WTC11 (cell line): ENCODE measurements at regions of chr20 and their contacts with region 1.

Region 1: DNA sequence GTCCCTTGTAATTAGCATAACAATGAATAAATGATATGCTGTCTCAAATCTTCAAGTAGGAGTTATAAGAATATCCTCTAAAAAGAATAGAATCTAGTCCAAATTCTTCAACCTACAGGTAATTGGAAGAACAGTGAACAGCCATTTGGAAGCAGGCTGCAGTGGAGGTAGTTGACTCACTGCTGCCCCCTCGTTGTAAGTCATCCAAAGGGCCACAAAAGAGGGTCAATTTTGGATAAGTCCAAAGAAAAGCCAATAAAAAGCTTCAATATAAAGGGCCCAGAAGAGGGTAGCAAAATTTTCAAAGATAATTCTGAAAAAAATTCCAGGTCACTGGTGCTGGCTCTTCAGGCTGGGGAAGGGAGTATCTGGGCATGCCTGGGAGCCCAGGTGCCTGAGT is 60.8 kb upstream of the SSTR4 start:
- DNase-seq: peak; percentile 41
- ATAC-seq: peak; percentile 79
- H3K4me3 Mint-ChIP-seq: no peak overlapping the region
- H3K27ac Mint-ChIP-seq: no peak overlapping the region
- H3K4me1 Mint-ChIP-seq: peaks cover 15% of the 10 kb centered on the region
- H3K27me3 Mint-ChIP-seq: peaks cover 9% of the 10 kb centered on the region
- CTCF ChIP-seq: peak; percentile 47

Region 2: DNA sequence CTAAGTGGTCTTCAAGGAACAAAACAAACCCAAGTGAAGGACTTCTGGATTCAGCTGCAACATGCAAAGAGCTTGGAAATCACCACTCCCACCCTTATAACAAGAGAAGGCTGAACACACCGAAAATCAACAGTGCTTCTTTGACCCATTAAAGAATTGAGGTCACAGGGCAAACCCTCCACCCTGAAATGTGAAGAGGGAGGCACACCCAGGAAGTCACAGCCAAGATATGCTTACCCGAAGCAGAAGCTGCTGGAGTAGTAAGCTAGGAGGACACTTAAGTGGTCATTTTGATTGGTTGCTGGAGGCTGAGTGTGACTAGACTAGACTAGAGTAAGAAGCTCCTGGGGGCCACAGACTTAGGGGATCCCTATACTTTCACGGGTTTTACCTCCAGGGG is 127.5 kb before region 1 on chr20:
- CTCF ChIA-PET with region 1: interaction called, 28 read pairs
- POLR2A ChIA-PET with region 1: no interaction called
- DNase-seq: no peak
- ATAC-seq: no peak
- H3K4me3 Mint-ChIP-seq: no peak overlapping the region
- H3K27ac Mint-ChIP-seq: no peak overlapping the region
- H3K4me1 Mint-ChIP-seq: 0 out of 2 replicates have a peak, but pooled peaks cover 3% of the 10 kb centered on the region
- H3K27me3 Mint-ChIP-seq: no peaks in the 10 kb centered on the region
- CTCF ChIP-seq: no peak

Region 3: DNA sequence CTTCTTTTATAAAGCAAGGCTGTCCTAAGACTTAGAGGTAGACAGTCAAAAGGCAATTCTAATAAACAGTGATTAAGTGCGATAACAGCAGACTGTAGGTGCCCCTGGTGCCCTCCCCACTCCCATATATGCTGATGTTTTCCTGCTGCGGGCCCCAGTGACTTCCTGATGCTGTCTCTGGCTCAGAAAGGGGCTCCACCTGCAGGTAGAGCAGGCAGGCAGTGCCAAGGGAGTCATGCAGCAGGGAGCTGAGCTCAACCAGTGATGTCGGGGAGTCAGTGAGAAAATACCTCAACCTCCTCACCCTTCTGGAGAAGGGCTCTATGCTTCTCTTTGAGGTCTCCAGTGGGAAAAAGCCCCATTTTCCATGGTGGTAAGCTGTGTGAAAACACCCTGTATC is 65.9 kb before region 1 on chr20:
- CTCF ChIA-PET with region 1: interaction called, 14 read pairs
- POLR2A ChIA-PET with region 1: no interaction called
- DNase-seq: peak; percentile 17
- ATAC-seq: peak; percentile 80
- H3K4me3 Mint-ChIP-seq: no peak overlapping the region
- H3K27ac Mint-ChIP-seq: no peak overlapping the region
- H3K4me1 Mint-ChIP-seq: peaks cover 5% of the 10 kb centered on the region; the same call in 1 of the 2 replicates
- H3K27me3 Mint-ChIP-seq: no peaks in the 10 kb centered on the region
- CTCF ChIP-seq: no peak

Region 4: DNA sequence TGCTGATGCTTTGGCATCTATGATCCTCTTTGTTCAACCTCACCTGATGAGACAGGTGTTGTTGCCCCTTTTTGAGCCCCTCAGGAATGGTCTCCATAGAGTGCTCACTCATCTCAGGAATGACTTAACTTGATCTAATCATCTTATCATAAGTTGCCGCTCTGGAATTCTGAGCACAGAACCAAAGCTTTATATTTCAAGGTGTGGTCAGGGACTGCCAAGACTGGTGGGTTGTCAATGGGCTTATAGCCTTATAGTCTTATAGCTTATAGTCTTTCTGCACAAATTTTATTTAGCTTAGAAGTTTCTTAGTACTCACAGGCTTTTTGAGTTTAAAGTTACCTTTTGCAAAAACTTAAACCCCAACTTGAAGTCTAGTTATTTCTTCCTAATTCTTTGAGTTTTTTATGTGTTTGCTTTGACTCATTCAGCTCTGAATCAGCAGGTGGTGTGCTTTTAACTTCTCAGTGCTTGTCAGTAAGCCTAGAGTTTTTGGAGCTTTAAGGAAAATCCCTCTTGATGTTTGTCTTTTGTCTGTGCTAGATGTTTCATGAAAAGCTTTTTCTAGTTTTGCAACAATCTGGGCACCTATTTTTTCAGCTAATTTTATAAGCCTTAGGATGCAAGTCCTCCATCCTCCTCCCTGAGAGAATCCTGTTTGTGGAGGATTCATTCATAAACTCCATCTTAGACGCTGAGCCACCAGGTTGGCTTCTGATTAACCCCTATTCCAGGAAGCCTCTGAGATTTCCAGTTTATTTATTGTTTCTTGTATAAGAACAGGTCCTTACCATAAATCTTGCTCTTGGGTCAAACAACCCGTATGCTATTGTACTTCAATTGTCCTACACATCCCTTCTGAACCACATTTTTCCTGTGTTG is 11.6 kb before region 1 on chr20:
- CTCF ChIA-PET with region 1: interaction called, 40 read pairs
- POLR2A ChIA-PET with region 1: interaction called, 3 read pairs
- DNase-seq: no peak
- ATAC-seq: no peak
- H3K4me3 Mint-ChIP-seq: no peak overlapping the region
- H3K27ac Mint-ChIP-seq: no peak overlapping the region
- H3K4me1 Mint-ChIP-seq: peaks cover 12% of the 10 kb centered on the region
- H3K27me3 Mint-ChIP-seq: no peaks in the 10 kb centered on the region
- CTCF ChIP-seq: no peak

Region 5: DNA sequence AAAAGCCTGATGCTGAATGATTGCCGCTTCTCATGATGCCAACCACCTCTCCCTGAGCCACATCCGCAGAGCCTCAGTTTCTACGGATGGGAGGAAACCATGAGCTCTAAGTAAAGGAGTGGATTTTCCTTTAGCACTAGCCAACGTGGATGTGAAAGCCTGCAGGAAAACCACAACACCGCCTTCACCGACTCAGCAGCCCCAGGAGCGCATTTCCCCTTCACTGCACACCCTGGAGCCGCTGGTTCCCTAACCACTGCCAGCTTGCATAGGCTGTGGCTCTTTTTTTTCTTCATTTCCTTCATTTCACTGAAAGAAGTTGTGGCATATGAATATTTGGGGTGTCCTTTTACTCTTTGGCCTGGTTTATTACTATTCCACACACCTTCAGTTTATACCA is 10.3 kb after region 1 on chr20:
- CTCF ChIA-PET with region 1: interaction called, 12 read pairs
- POLR2A ChIA-PET with region 1: no interaction called
- DNase-seq: no peak
- ATAC-seq: no peak
- H3K4me3 Mint-ChIP-seq: no peak overlapping the region
- H3K27ac Mint-ChIP-seq: no peak overlapping the region
- H3K4me1 Mint-ChIP-seq: no peaks in the 10 kb centered on the region
- H3K27me3 Mint-ChIP-seq: peaks cover 10% of the 10 kb centered on the region
- CTCF ChIP-seq: no peak

Region 6: DNA sequence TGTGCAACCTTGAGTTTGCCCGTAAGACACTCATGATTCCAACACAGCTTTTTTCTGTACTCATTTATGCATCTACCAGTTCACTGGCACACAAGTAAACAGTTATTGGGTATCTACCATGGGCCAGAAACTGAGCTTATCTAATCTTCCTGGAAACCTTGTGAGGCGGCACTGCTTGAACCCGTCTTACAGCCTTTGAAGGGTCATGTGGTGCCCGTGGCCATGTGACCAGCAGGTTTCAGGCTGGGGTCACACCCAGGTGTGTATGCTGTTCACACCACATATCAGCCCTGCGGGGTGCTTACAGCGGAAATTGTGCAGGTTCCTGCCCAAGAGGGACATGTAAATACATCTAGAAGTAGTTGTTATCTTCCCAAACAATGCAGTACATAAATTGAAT is 69.0 kb after region 1 on chr20:
- CTCF ChIA-PET with region 1: no interaction called
- POLR2A ChIA-PET with region 1: no interaction called
- DNase-seq: no peak
- ATAC-seq: no peak
- H3K4me3 Mint-ChIP-seq: no peak overlapping the region
- H3K27ac Mint-ChIP-seq: no peak overlapping the region
- H3K4me1 Mint-ChIP-seq: peaks cover 56% of the 10 kb centered on the region
- H3K27me3 Mint-ChIP-seq: peaks cover 82% of the 10 kb centered on the region
- CTCF ChIP-seq: no peak

Region 7: GRCh38 chr20:23061734-23062561 is 87.6 kb after region 1 on chr20:
- CTCF ChIA-PET with region 1: interaction called, 10 read pairs
- POLR2A ChIA-PET with region 1: no interaction called
- DNase-seq: peak; percentile 70
- ATAC-seq: peak; percentile 95
- H3K4me3 Mint-ChIP-seq: no peak overlapping the region
- H3K27ac Mint-ChIP-seq: peak overlapping the region; percentile 38
- H3K4me1 Mint-ChIP-seq: peaks cover 32% of the 10 kb centered on the region
- H3K27me3 Mint-ChIP-seq: no peaks in the 10 kb centered on the region
- CTCF ChIP-seq: 0 out of 2 replicates have a peak, but pooled peaks have one; percentile 14

Region 8: GRCh38 chr20:23147964-23148730 is 173.8 kb after region 1 on chr20:
- CTCF ChIA-PET with region 1: no interaction called
- POLR2A ChIA-PET with region 1: no interaction called
- DNase-seq: no peak
- ATAC-seq: no peak
- H3K4me3 Mint-ChIP-seq: no peak overlapping the region
- H3K27ac Mint-ChIP-seq: no peak overlapping the region
- H3K4me1 Mint-ChIP-seq: peaks cover 6% of the 10 kb centered on the region
- H3K27me3 Mint-ChIP-seq: no peaks in the 10 kb centered on the region
- CTCF ChIP-seq: no peak